Right cardiac atrium (tissue), 5 donors: ENCODE measurements at regions of chr7 and their contacts with region 1.

Region 1: DNA sequence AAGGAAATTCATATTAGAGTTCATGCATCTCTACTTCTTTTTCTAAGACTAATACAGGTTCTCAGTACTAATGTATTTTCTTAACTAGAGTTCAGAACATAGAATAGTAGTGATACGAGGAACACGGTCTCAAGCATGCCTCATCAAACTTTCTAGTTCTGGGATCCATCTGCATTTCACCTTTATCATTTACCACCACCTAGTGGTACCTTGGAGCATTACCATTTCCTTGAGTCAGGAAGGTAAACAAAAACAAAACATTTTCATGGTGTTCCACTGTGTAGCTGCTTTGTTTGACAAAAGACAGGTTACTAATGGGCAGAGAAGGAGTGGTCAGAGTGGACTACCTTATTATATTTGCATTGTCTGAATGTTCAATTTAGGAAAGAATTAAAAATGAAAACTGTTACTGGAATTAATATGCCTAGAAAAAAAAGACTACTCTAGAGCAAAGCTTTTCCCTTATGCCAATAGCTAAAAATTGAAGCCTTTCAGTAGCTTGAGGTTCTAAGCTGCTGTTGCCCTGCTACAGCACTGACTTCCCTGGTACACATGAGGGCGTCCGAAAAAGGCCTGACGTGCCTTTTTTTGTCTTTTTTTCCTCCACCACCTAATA is 44.5 kb downstream of the STARD3NL start:
- DNase-seq: no peak
- ATAC-seq: peak; percentile 77 to 83
- H3K4me3 ChIP-seq: no peak overlapping the region
- H3K27ac ChIP-seq: no peak overlapping the region
- H3K4me1 ChIP-seq: no peaks in the 10 kb centered on the region
- H3K27me3 ChIP-seq: no peaks in the 10 kb centered on the region

Region 2: GRCh38 chr7:37901236-37901827 is 321.3 kb before region 1 on chr7:
- intact Hi-C with region 1: loop called in 3 of 4 experiments (anchors 5 to 10 kb)
- DNase-seq: no peak
- ATAC-seq: peak; percentile 47 to 55
- H3K4me3 ChIP-seq: no peak overlapping the region
- H3K27ac ChIP-seq: no peak overlapping the region
- H3K4me1 ChIP-seq: no peaks in the 10 kb centered on the region
- H3K27me3 ChIP-seq: no peaks in the 10 kb centered on the region

Region 3: GRCh38 chr7:38107486-38107893 is 115.1 kb before region 1 on chr7:
- intact Hi-C with region 1: loop called in 2 of 4 experiments (anchors 1 to 5 kb)
- DNase-seq: peak; percentile 35 to 59 (median 42)
- ATAC-seq: peak; percentile 45 to 83
- H3K4me3 ChIP-seq: no peak overlapping the region
- H3K27ac ChIP-seq: no peak overlapping the region
- H3K4me1 ChIP-seq: no peaks in the 10 kb centered on the region
- H3K27me3 ChIP-seq: no peaks in the 10 kb centered on the region

Region 4: GRCh38 chr7:38122501-38122900 is 100.1 kb before region 1 on chr7:
- intact Hi-C with region 1: loop called in 1 of 4 experiments (anchors 5 kb)
- DNase-seq: no peak
- ATAC-seq: no peak
- H3K4me3 ChIP-seq: no peak overlapping the region
- H3K27ac ChIP-seq: no peak overlapping the region
- H3K4me1 ChIP-seq: no peaks in the 10 kb centered on the region
- H3K27me3 ChIP-seq: no peaks in the 10 kb centered on the region

Region 5: GRCh38 chr7:38257350-38257677 is 34.7 kb after region 1 on chr7:
- intact Hi-C with region 1: no loop called
- DNase-seq: no peak
- ATAC-seq: peak in 1 of 2 donors; percentile 21
- H3K4me3 ChIP-seq: no peak overlapping the region
- H3K27ac ChIP-seq: no peak overlapping the region
- H3K4me1 ChIP-seq: no peaks in the 10 kb centered on the region
- H3K27me3 ChIP-seq: no peaks in the 10 kb centered on the region

Region 6: DNA sequence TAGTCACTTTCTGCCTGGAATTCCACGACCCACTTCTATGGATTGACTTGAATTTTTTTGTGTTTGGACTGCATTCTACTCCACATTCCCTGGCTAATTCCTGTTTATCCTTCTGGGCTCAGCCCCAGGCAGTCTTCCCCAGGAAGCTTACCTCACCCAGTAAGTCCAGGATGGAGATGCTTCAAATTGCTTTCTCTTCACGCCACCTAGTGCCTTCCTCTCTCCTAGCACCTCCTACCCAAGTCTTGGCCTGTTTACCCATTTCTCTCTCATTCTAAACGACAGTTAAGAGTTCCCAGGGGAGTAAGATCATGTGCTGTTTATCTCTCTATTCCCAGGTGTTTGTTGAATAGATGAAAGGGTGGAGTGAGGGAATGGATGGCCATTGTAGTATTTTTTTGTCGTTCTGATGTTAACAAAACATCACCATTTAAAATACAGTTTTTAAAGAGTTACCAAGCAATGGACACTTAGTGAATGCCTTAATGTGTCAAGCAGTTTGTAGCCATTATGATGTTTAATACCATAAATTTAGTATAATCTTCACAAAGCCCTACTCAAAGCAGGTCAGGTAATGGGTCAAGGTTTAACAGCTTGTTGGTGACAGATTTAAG is 96.3 kb after region 1 on chr7:
- intact Hi-C with region 1: loop called in 1 of 4 experiments (anchors 5 kb)
- DNase-seq: no peak
- ATAC-seq: peak; percentile 74 to 90
- H3K4me3 ChIP-seq: no peak overlapping the region
- H3K27ac ChIP-seq: no peak overlapping the region
- H3K4me1 ChIP-seq: no peaks in the 10 kb centered on the region
- H3K27me3 ChIP-seq: no peaks in the 10 kb centered on the region